Activated T-helper 2 cell treated with anti-CD3 and anti-CD28 coated beads, Interferon-gamma antibody, Interleukin-2, Interleukin-4, amounts not matched to agents 10 μg/mL and 5 μg/mL and 100 μg/mL, durations not matched to agents 14 hours and 24 hours and 36 hours (primary cell): ENCODE measurements at regions of chr20 and their contacts with region 1.

Region 1: DNA sequence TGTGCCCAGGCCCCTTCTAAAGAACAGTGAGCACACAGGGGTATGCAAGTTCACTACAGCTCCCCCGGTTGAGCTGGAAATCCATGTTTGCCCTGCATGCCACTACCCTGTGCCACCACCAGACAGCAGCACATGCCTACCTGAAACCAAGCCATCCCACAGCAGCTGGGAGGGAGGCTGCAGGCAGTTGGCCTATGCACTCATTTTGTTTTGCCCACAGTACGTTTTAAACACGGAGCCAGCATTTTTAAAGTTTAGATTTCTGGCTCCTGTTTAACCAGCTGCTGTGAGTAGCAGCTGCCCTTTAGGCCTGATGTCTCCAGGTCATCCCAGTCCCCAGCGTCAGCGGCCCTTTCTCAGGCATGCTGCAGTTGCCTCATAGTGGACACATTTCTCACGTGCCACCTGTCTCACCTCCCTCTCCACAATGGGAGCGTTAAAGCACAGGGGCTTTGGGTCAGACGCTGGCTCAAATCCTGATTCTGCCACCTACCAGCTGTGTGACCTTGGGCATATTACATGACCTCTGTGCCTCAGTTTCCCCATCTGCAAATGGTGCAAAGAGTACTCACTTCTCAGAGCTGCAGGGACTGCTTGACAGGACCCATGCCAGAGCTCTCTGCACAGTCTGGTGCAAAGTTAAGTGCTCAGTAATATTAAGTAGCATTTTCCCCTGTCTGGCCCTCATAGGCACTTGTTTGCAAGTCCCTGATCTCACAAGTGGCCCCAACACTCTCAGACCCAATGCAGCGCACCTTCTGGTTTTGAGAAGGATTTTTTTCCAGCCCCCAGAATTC is 8.1 kb upstream of the UBE2V1 start:
- DNase-seq: peak; percentile 40
- H3K4me3 Mint-ChIP-seq: no peak overlapping the region
- H3K27ac Mint-ChIP-seq: no peak overlapping the region
- H3K4me1 Mint-ChIP-seq: peaks cover 4% of the 10 kb centered on the region
- H3K27me3 Mint-ChIP-seq: no peaks in the 10 kb centered on the region

Region 2: DNA sequence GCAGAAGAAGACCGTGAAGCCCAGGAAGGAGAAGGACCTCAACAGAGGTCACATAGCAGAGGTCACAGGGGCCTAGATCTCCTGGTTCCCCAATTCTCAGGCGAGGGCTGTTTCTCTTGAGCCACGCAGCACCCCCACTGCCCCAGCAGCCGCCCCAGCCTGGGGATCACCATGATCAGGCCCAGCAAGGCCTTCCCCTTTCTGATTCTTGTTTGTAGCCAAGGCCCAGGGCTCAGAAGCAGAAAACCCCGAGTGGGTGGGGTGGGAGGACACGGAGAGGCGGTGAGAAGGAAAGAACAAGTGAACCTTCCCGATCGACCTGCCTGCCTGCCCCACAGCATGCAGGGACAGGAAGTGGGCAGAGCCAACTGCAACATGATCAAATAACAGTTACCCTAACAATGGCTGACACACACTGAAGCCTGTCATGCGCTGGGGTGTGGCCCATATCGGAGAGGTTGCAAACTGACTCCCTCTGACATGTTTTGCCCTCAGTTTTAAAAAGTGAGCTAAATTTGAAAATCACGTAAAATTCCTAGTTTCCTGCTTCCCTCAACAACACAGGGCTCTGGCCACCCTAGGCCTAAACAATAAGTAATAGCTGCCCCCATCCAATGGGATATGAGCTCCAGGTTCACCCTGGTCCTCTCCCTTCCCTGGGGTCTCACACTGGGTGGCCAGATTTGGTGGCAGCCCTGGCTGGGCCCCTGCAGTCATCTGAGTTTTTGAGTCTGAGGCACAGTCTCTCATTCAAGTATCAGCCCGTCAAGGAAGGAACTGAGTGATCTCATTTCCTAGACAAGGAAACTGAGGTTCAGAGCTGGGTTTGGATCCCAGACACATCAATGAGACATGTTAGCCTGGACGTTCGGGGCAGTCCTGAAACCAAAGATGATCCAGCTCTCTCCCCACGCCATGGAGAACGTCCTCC is 25.9 kb after region 1 on chr20:
- intact Hi-C with region 1: loop called (anchors 2 kb)
- DNase-seq: peak; percentile 76
- H3K4me3 Mint-ChIP-seq: peak overlapping the region; percentile 75
- H3K27ac Mint-ChIP-seq: peak overlapping the region; percentile 96
- H3K4me1 Mint-ChIP-seq: peaks cover 52% of the 10 kb centered on the region
- H3K27me3 Mint-ChIP-seq: no peaks in the 10 kb centered on the region

Region 3: DNA sequence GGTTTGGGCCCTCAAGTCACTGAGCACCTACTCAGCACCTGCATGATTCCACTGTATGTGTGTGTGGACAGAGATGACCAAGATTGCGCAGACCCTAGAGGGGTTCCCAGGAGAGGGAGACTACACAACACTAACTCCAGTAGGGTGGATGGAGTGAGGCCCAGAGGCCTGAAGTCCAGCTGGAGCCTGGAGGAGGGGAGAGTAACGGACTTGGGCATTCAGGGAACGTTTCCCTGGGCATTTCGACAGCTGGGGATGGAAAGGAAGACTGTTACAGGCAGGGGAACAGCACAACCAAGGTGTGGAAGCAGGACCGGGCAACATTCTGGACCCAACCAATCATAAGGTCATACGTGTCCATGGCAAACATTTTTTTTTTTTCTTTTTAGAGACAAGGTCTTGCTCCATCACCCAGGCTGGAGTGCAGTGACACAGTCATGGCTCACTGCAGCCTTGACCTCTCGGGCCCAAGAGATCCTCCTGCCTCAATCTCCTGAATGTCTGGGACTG is 58.5 kb after region 1 on chr20:
- intact Hi-C with region 1: loop called (anchors 2 kb)
- DNase-seq: no peak
- H3K4me3 Mint-ChIP-seq: no peak overlapping the region
- H3K27ac Mint-ChIP-seq: no peak overlapping the region
- H3K4me1 Mint-ChIP-seq: no peaks in the 10 kb centered on the region
- H3K27me3 Mint-ChIP-seq: peaks cover 4% of the 10 kb centered on the region

Region 4: GRCh38 chr20:50237349-50238085 is 116.4 kb after region 1 on chr20:
- intact Hi-C with region 1: no loop called
- DNase-seq: no peak
- H3K4me3 Mint-ChIP-seq: no peak overlapping the region
- H3K27ac Mint-ChIP-seq: no peak overlapping the region
- H3K4me1 Mint-ChIP-seq: peaks cover 6% of the 10 kb centered on the region
- H3K27me3 Mint-ChIP-seq: peaks cover 3% of the 10 kb centered on the region